ENCODE measurements at regions of chr6 and their contacts with region 1.

Region 1: GRCh38 chr6:44464527-44465310 is 77.2 kb downstream of the CDC5L start:
- DNase-seq: no peak
- H3K4me3 ChIP-seq: no peak overlapping the region
- H3K27ac ChIP-seq: no peak overlapping the region
- H3K4me1 ChIP-seq: no peaks in the 10 kb centered on the region
- H3K27me3 ChIP-seq: no peaks in the 10 kb centered on the region
- CTCF ChIP-seq: no peak
- POLR2A ChIP-seq: no peak

Region 2: GRCh38 chr6:44221291-44221960 is 243.3 kb before region 1 on chr6:
- intact Hi-C with region 1: no loop called
- DNase-seq: peak; percentile 85 to 90
- H3K4me3 ChIP-seq: peak overlapping the region in 1 of 2 donors; percentile 5
- H3K27ac ChIP-seq: peak overlapping the region; percentile 89 to 91
- H3K4me1 ChIP-seq: peaks cover 0 to 20% of the 10 kb centered on the region in 2 donors
- H3K27me3 ChIP-seq: no peaks in the 10 kb centered on the region
- CTCF ChIP-seq: peak; percentile 63 to 86 (median 82)
- POLR2A ChIP-seq: no peak

Region 3: GRCh38 chr6:44667668-44668390 is 203.1 kb after region 1 on chr6:
- intact Hi-C with region 1: no loop called
- DNase-seq: no peak
- H3K4me3 ChIP-seq: no peak overlapping the region
- H3K27ac ChIP-seq: no peak overlapping the region
- H3K4me1 ChIP-seq: peaks cover 0 to 5% of the 10 kb centered on the region in 2 donors
- H3K27me3 ChIP-seq: no peaks in the 10 kb centered on the region
- CTCF ChIP-seq: no peak
- POLR2A ChIP-seq: no peak

Region 4: DNA sequence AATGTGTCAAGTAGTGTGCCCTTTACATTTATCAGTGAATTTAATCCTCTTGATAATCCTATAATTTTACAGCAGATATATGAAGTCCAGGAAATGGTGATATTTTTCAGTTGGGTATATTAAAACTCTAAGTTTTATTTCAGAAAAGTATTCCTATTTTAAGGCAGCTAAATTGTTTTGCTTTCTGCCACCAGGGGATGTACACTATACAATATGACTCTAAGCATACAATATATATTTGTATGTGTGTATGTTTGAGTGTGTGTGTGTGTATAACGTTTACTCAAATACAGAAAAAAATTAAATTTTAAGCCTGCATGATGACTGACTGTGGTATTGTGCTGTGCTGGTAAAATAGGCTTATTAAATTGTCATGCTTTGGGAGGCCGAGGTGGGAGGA is 761.4 kb after region 1 on chr6:
- intact Hi-C with region 1: no loop called
- DNase-seq: no peak
- H3K4me3 ChIP-seq: no peak overlapping the region
- H3K27ac ChIP-seq: no peak overlapping the region
- H3K4me1 ChIP-seq: no peaks in the 10 kb centered on the region
- H3K27me3 ChIP-seq: no peaks in the 10 kb centered on the region
- CTCF ChIP-seq: no peak
- POLR2A ChIP-seq: no peak

Region 5: DNA sequence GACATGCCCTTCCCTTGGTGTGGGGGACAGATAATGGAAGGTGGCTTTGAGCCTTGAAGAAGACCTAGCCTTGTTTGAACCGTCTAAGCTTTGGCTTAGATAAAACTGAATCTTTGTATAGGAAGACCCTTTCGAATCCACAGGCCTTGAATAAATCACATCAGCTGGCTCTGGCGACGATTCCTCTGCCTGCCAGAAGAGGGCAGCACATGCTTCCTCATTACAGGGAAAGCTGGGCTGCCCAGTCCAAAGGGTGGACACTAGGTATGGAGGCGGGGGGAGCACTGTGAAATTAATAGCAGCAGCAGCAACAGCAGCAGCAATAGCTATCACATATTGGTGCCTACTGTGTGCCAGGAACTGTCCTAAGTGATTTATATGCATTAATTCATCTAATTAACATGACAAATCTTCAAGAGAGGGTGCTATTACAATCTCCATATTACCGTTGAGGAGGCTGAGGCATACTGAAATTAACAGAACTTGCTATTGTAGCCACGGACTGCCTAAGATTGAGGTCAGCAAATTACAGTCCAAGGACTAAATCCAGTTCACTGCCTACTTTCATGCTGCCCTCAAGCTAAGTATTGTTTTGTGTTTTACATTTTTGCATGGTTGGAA is 1465.8 kb after region 1 on chr6:
- intact Hi-C with region 1: loop called (anchors 5 kb)
- DNase-seq: peak; percentile 44 to 59
- H3K4me3 ChIP-seq: no peak overlapping the region
- H3K27ac ChIP-seq: no peak overlapping the region
- H3K4me1 ChIP-seq: no peaks in the 10 kb centered on the region
- H3K27me3 ChIP-seq: no peaks in the 10 kb centered on the region
- CTCF ChIP-seq: peak; percentile 72 to 87 (median 84)
- POLR2A ChIP-seq: no peak

Measured in uterus (tissue), 4 donors.